ENCODE measurements at regions of chr4 and their contacts with region 1.

Region 1: GRCh38 chr4:186587416-186588018 is 32.1 kb upstream of the MTNR1A start:
- DNase-seq: peak; percentile 86
- ATAC-seq: peak; percentile 82

Region 2: DNA sequence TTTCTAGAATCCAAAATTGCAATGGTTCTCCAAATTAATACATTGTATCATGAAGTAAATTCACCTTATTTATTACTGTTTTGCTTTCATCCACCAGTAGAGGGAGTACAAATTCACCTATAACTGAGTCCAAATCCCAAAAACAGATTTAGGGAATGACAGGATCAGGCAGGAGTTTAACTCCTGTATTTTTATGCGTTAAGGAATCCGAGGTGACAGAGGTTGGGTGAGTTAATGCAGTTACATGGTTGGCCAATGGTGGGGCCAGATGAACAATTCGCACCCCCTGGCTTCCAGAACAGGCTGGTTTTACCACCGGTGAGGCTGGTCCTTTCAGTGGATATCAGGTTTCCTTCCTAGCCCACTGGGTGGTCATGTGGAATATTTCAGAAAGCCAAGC is 114.6 kb before region 1 on chr4:
- intact Hi-C with region 1: loop called (anchors 5 kb)
- DNase-seq: no peak
- ATAC-seq: no peak

Region 3: GRCh38 chr4:186642998-186643397 is 55.5 kb after region 1 on chr4:
- intact Hi-C with region 1: no loop called
- DNase-seq: no peak
- ATAC-seq: peak; percentile 74

Measured in sciatic nerve (tissue), 2 donors.